ENCODE measurements at regions of chr22 and their contacts with region 1.

Region 1: DNA sequence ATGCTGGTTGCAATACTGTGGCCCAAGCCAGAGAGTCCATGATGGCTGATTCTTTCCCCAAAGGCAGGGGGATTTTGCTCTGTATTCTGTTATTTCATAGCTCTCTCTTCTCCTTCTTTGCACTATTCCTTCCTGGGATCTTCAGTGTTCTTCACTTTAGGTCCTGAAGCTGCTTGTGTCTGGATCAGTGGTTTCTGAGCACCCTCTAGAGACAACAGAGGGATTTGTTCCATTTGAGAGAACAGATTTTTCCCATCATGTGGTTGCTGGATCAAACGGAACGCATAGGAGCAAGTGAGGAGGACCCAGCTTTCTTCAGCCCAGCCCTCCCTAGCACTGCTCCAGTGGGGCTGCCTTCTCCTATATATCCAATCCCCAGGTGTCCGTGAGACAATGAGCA is 68.7 kb upstream of the SYN3 start:
- DNase-seq: peak; percentile 50
- H3K4me3 Mint-ChIP-seq: no peak overlapping the region
- H3K27ac Mint-ChIP-seq: no peak overlapping the region
- H3K4me1 Mint-ChIP-seq: peaks cover 5% of the 10 kb centered on the region
- H3K27me3 Mint-ChIP-seq: no peaks in the 10 kb centered on the region
- CTCF ChIP-seq: peak; percentile 61

Region 2: GRCh38 chr22:32971276-32971675 is 155.6 kb before region 1 on chr22:
- CTCF ChIA-PET with region 1: no interaction called
- POLR2A ChIA-PET with region 1: no interaction called
- intact Hi-C with region 1: no loop called
- DNase-seq: no peak
- H3K4me3 Mint-ChIP-seq: no peak overlapping the region
- H3K27ac Mint-ChIP-seq: no peak overlapping the region
- H3K4me1 Mint-ChIP-seq: peaks cover under 1% of the 10 kb centered on the region
- H3K27me3 Mint-ChIP-seq: no peaks in the 10 kb centered on the region
- CTCF ChIP-seq: no peak

Region 3: DNA sequence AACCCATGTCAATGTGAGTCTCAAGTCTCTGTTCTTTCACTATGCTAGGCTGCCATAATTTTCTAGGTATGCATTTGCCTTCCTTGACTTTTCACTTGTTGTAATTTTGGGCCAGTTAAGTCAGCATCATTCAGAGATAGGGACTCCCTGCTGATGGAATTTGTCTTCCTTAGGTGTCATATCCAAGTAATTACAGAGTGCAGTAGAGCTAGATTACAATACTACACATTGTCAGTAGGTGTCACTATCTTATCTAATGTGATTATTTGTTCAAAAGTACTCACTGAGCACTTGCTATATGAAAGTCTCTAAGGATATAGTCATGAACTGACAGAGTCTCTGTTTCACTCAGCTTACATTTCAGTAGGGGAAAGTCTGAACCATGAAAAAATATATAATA is 43.7 kb before region 1 on chr22:
- CTCF ChIA-PET with region 1: interaction called, 4 read pairs
- POLR2A ChIA-PET with region 1: no interaction called
- intact Hi-C with region 1: loop called (anchors 2 kb)
- DNase-seq: peak; percentile 17
- H3K4me3 Mint-ChIP-seq: no peak overlapping the region
- H3K27ac Mint-ChIP-seq: no peak overlapping the region
- H3K4me1 Mint-ChIP-seq: no peaks in the 10 kb centered on the region
- H3K27me3 Mint-ChIP-seq: peaks cover 38% of the 10 kb centered on the region
- CTCF ChIP-seq: peak; percentile 29